GM12878 (cell line): ENCODE measurements at regions of chr15 and their contacts with region 1.

Region 1: GRCh38 chr15:40857601-40858341 is 13.9 kb downstream of the SPINT1 start:
- DNase-seq: no peak
- ATAC-seq: peak; percentile 89
- H3K4me3 ChIP-seq: no peak overlapping the region
- H3K27ac ChIP-seq: no peak overlapping the region
- H3K4me1 ChIP-seq: peaks cover 4% of the 10 kb centered on the region
- H3K27me3 ChIP-seq: no peaks in the 10 kb centered on the region
- CTCF ChIP-seq: peak; percentile 95 to 99 (median 98)
- EP300 ChIP-seq: no peak
- POLR2A ChIP-seq: no peak
- RAD21 ChIP-seq: peak; percentile 95

Region 2: DNA sequence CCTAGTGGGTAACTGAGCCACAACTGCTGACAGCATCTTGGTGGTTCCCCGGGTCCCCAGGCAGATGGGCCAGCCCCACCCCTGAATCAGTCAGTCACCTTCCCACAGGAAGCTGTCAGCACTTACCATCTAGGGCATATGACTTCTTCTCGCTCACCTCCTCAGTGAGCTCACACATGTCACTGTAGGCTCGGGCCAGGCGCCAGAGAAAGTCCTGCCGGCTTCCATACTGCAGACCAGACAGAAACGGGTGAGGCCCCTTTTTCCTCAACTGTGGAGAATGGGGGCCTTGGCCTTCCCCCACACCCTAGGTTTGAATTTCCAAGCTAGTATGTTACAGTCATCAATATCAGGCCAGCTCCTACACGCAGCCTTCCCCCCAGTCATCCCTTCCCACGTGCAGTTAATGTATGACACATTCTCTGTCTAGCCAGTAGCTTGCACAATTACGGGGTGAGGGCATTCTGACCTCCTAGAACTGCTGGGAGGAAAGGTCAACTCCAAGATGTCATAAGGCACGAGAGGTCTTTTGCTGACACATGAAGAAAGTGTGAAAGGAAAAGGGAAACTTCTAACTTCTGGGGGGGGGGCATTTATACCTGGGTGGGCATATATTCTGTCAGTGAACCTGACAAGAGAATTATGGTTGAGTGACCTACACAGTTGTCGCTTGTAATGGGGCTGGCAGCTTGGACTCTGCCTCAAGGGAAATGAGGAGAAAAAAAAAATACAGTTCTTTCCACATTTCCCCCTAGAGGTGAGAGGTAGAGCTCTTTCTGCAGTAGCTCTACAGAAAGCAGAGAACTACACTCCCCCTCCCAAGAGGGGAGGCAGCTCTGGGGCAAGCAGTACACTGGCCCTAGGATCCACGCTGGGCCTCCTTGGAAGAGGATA is 113.6 kb before region 1 on chr15:
- CTCF ChIA-PET with region 1: interaction called, 18 read pairs
- POLR2A ChIA-PET with region 1: no interaction called
- RAD21 ChIA-PET with region 1: interaction called, 4 read pairs
- SMC1A ChIA-PET with region 1: interaction called, 4 read pairs
- in situ Hi-C with region 1: no loop called
- intact Hi-C with region 1: no loop called
- DNase-seq: no peak
- ATAC-seq: peak; percentile 67
- H3K4me3 ChIP-seq: no peak overlapping the region
- H3K27ac ChIP-seq: no peak overlapping the region
- H3K4me1 ChIP-seq: peaks cover 9% of the 10 kb centered on the region
- H3K27me3 ChIP-seq: no peaks in the 10 kb centered on the region
- CTCF ChIP-seq: no peak
- EP300 ChIP-seq: no peak
- POLR2A ChIP-seq: no peak
- RAD21 ChIP-seq: no peak

Region 3: DNA sequence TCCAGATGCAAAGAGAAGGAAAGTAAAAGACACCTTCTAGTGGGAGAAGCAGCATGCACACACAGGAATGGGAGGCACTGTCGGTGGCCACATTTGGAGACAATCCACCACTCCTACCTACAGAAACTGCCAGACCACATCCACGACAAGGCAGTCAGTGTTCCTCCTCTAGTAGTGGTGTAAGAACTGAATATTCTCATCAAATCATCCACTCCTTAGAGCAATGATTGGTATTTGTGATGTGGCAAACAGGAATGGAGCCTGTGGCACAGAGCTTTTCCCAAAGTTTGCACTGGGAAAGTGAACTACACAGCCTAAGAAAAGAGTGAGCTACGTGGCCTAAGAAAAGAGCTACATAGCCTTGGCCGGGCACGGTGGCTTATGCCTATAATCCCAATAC is 19.0 kb before region 1 on chr15:
- CTCF ChIA-PET with region 1: interaction called, 140 read pairs
- POLR2A ChIA-PET with region 1: interaction called, 3 read pairs
- RAD21 ChIA-PET with region 1: interaction called, 41 read pairs
- SMC1A ChIA-PET with region 1: interaction called, 5 read pairs
- in situ Hi-C with region 1: no loop called
- intact Hi-C with region 1: no loop called
- DNase-seq: no peak
- ATAC-seq: no peak
- H3K4me3 ChIP-seq: no peak overlapping the region
- H3K27ac ChIP-seq: no peak overlapping the region
- H3K4me1 ChIP-seq: no peaks in the 10 kb centered on the region
- H3K27me3 ChIP-seq: peaks cover 1 to 3% of the 10 kb centered on the region in 2 experiments; a peak in 1 of 4 replicates
- CTCF ChIP-seq: no peak
- EP300 ChIP-seq: no peak
- POLR2A ChIP-seq: no peak
- RAD21 ChIP-seq: no peak

Region 4: GRCh38 chr15:40873625-40874561 is 16.1 kb after region 1 on chr15 and contains the start of gene RHOV:
- CTCF ChIA-PET with region 1: no interaction called
- POLR2A ChIA-PET with region 1: no interaction called
- RAD21 ChIA-PET with region 1: no interaction called
- SMC1A ChIA-PET with region 1: interaction called, 290 read pairs
- in situ Hi-C with region 1: no loop called
- intact Hi-C with region 1: loop called (anchors 2 kb)
- DNase-seq: no peak
- ATAC-seq: peak; percentile 80
- H3K4me3 ChIP-seq: peak within 1 kb of the TSS; percentile 65
- H3K27ac ChIP-seq: peak within 1 kb of the TSS; percentile 78
- H3K4me1 ChIP-seq: peaks cover 37% of the 10 kb centered on the region
- H3K27me3 ChIP-seq: no peaks in the 10 kb centered on the region
- CTCF ChIP-seq: peak; percentile 44 to 63 (median 55); a peak in 5 of 6 replicates
- EP300 ChIP-seq: no peak
- POLR2A ChIP-seq: peak; percentile 90
- RAD21 ChIP-seq: peak; percentile 32; the same call in 1 of the 2 replicates
- polyA plus RNA-seq, gene RHOV: 0.24 to 1.3 TPM

Region 5: GRCh38 chr15:40906091-40906990 is 48.6 kb after region 1 on chr15:
- CTCF ChIA-PET with region 1: interaction called, 64 read pairs
- POLR2A ChIA-PET with region 1: interaction called, 4 read pairs
- RAD21 ChIA-PET with region 1: interaction called, 33 read pairs
- SMC1A ChIA-PET with region 1: interaction called, 15 read pairs
- in situ Hi-C with region 1: no loop called
- intact Hi-C with region 1: no loop called
- DNase-seq: no peak
- ATAC-seq: peak; percentile 91
- H3K4me3 ChIP-seq: peak overlapping the region; percentile 60
- H3K27ac ChIP-seq: peak overlapping the region; percentile 49
- H3K4me1 ChIP-seq: peaks cover 24% of the 10 kb centered on the region
- H3K27me3 ChIP-seq: no peaks in the 10 kb centered on the region
- CTCF ChIP-seq: peak; percentile 73 to 90 (median 89)
- EP300 ChIP-seq: no peak
- POLR2A ChIP-seq: peak; percentile 52; the same call in 1 of the 2 replicates
- RAD21 ChIP-seq: peak; percentile 66

Region 6: DNA sequence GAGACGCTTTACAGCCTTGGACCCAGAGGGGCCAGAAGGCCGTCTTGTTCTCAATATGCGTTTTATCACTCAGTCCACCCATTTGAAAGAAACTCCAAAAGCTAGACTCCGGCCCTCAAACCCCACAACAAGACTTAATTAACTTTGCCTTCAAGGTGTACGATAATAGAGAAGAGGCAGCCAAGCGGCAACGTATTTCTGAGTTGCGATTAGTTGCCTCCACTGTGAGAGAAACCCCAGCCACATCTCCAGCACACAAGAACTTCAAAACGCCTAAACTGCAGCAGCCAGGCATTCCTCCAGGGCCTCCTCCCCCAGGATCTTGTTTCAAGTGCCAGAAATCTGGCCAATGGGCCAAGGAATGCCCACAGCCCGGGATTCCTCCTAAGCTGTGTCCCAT is 275.7 kb after region 1 on chr15:
- CTCF ChIA-PET with region 1: no interaction called
- POLR2A ChIA-PET with region 1: no interaction called
- RAD21 ChIA-PET with region 1: no interaction called
- SMC1A ChIA-PET with region 1: no interaction called
- in situ Hi-C with region 1: no loop called
- intact Hi-C with region 1: no loop called
- DNase-seq: no peak
- ATAC-seq: no peak
- H3K4me3 ChIP-seq: no peak overlapping the region
- H3K27ac ChIP-seq: no peak overlapping the region
- H3K4me1 ChIP-seq: no peaks in the 10 kb centered on the region
- H3K27me3 ChIP-seq: no peaks in the 10 kb centered on the region
- CTCF ChIP-seq: no peak
- EP300 ChIP-seq: no peak
- POLR2A ChIP-seq: no peak
- RAD21 ChIP-seq: no peak